ENCODE measurements at regions of chrX and their contacts with region 1.

Region 1: GRCh38 chrX:39196192-39197102 is 395.2 kb downstream of the MID1IP1 start:
- DNase-seq: peak; percentile 73
- H3K4me3 Mint-ChIP-seq: peak overlapping the region; percentile 49
- H3K27ac Mint-ChIP-seq: peak overlapping the region; percentile 80
- H3K4me1 Mint-ChIP-seq: peaks cover 46% of the 10 kb centered on the region
- H3K27me3 Mint-ChIP-seq: no peaks in the 10 kb centered on the region

Region 2: GRCh38 chrX:39162322-39162735 is 34.1 kb before region 1 on chrX:
- CTCF ChIA-PET with region 1: interaction called, 9 read pairs
- intact Hi-C with region 1: loop called (anchors 5 kb)
- DNase-seq: peak; percentile 66
- H3K4me3 Mint-ChIP-seq: peak overlapping the region; percentile 41
- H3K27ac Mint-ChIP-seq: no peak overlapping the region
- H3K4me1 Mint-ChIP-seq: peaks cover 28% of the 10 kb centered on the region
- H3K27me3 Mint-ChIP-seq: peaks cover 2% of the 10 kb centered on the region

Region 3: DNA sequence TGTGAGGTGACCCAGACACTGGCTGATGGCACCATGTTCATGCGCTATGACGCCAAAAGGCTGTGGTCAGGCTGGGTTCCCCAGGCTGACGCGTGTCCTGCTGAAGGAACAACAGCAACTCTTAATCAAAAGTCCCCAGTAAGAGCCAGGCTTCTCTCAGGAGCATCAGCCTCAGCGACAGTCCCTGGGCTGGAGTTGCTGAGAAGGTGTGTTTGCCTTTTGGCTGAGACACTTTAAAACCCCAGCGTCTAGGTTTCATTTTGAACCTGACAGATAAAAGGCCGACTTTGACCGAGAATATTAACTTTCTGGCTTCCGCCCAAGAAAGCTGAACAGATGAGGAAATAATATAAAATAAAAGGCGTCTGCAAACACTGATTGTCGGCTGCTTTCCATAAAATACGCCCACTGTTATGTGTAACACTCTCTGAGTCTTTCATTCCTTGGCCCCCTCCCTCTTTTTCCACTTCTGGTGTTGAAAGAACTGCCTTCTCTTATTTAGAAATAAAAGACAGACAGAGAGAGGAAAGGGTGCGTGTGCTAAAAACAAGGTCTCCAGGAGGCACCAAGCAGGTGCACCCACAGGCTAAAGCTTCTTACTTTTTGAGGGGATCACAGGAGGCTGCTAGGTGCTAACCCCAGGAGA is 21.6 kb before region 1 on chrX:
- CTCF ChIA-PET with region 1: no interaction called
- intact Hi-C with region 1: loop called (anchors 1 kb)
- DNase-seq: peak; percentile 68
- H3K4me3 Mint-ChIP-seq: peak overlapping the region; percentile 43
- H3K27ac Mint-ChIP-seq: peak overlapping the region; percentile 78
- H3K4me1 Mint-ChIP-seq: peaks cover 31% of the 10 kb centered on the region
- H3K27me3 Mint-ChIP-seq: no peaks in the 10 kb centered on the region

Region 4: DNA sequence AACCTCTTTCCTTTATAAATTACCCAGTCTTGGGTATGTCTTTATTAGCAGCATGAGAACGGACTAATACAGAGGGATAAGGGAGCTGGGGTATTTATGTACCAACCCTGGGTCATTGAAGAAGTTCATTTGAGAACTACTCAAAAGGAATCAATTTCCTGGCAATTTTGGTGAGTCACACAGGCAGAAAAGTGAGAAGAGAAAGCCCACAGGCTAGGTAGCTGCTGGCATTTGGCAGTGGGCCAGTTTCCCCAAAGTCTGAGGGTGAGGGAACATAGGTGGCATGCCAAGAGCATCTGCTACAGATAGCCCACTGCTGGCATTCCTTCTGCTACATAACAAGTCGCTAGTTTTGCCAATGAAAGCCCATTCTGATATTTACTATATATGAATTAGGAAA is 16.0 kb after region 1 on chrX:
- CTCF ChIA-PET with region 1: interaction called, 3 read pairs
- intact Hi-C with region 1: loop called (anchors 2 kb)
- DNase-seq: peak; percentile 68
- H3K4me3 Mint-ChIP-seq: no peak overlapping the region
- H3K27ac Mint-ChIP-seq: peak overlapping the region; percentile 16
- H3K4me1 Mint-ChIP-seq: peaks cover 17% of the 10 kb centered on the region
- H3K27me3 Mint-ChIP-seq: no peaks in the 10 kb centered on the region

Region 5: GRCh38 chrX:39242187-39242586 is 45.7 kb after region 1 on chrX:
- CTCF ChIA-PET with region 1: interaction called, 4 read pairs
- intact Hi-C with region 1: loop called (anchors 5 kb)
- DNase-seq: peak; percentile 17
- H3K4me3 Mint-ChIP-seq: no peak overlapping the region
- H3K27ac Mint-ChIP-seq: no peak overlapping the region
- H3K4me1 Mint-ChIP-seq: peaks cover 24% of the 10 kb centered on the region
- H3K27me3 Mint-ChIP-seq: no peaks in the 10 kb centered on the region

Region 6: GRCh38 chrX:39309018-39309635 is 112.7 kb after region 1 on chrX:
- CTCF ChIA-PET with region 1: no interaction called
- intact Hi-C with region 1: loop called (anchors 1 kb)
- DNase-seq: peak; percentile 75
- H3K4me3 Mint-ChIP-seq: no peak overlapping the region
- H3K27ac Mint-ChIP-seq: peak overlapping the region; percentile 100
- H3K4me1 Mint-ChIP-seq: peaks cover 79% of the 10 kb centered on the region
- H3K27me3 Mint-ChIP-seq: no peaks in the 10 kb centered on the region